ENCODE measurements at regions of chr1 and their contacts with region 1.

Region 1: GRCh38 chr1:42766741-42767509 is at the starts of genes C1orf50 and P3H1:
- DNase-seq: peak; percentile 99
- ATAC-seq: peak; percentile 94
- H3K4me3 Mint-ChIP-seq: no peak within 1 kb of the TSS
- H3K27ac Mint-ChIP-seq: peak within 1 kb of the TSS; percentile 95
- H3K4me1 Mint-ChIP-seq: peaks cover 22% of the 10 kb centered on the region
- H3K27me3 Mint-ChIP-seq: no peaks in the 10 kb centered on the region
- total RNA-seq, gene C1orf50: 10.4 to 10.9 TPM
- total RNA-seq, gene P3H1: 44.1 to 49.9 TPM

Region 2: GRCh38 chr1:42681741-42682483 is 85.0 kb before region 1 on chr1 and contains the start of gene YBX1:
- POLR2A ChIA-PET with region 1: interaction called, 34 read pairs
- DNase-seq: peak; percentile 92
- ATAC-seq: peak; percentile 96
- H3K4me3 Mint-ChIP-seq: peak within 1 kb of the TSS; percentile 95
- H3K27ac Mint-ChIP-seq: peak within 1 kb of the TSS; percentile 97
- H3K4me1 Mint-ChIP-seq: peaks cover 39% of the 10 kb centered on the region
- H3K27me3 Mint-ChIP-seq: no peaks in the 10 kb centered on the region
- total RNA-seq, gene YBX1: 529 to 531 TPM

Region 3: DNA sequence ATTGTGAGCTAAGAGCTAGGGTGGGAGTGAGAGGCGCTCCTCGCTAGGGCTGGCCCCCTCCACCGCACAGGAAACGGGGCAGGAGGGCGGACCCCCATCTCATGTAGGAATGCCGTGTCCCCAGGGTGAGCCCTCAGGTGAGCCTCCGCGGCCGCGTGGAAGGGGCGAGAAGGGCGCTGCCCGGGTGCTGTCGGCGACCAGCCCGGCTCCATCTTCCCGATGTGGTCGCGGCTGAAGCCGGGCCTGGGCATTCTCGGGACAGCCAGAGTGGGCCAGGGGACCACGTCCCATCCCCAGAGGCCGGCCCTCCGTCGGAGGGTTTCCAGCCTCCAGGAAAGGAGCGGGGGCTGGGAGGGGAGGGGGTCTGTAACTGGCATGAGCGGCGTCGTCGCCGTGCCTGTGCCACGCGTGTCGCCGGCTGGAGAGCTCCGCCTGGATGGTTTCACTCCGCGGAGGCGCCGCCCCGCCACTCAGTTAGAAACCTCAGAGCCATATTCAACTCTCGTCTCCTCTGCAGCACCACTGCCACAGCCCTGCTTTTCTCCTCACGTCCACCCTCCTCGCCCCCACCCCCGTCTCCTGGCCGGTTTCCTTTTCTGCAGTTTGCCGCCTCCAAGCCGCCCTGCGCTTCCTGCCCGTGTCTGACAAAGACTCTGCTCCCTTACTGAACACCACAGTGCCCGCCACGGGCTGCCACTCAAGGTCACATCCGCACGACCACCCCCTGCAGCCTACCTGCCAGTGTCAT is 18.2 kb after region 1 on chr1 and contains the start of gene TMEM269:
- POLR2A ChIA-PET with region 1: interaction called, 37 read pairs
- DNase-seq: peak; percentile 65
- ATAC-seq: peak; percentile 88
- H3K4me3 Mint-ChIP-seq: peak within 1 kb of the TSS; percentile 79
- H3K27ac Mint-ChIP-seq: peak within 1 kb of the TSS; percentile 68
- H3K4me1 Mint-ChIP-seq: peaks cover 8% of the 10 kb centered on the region
- H3K27me3 Mint-ChIP-seq: no peaks in the 10 kb centered on the region
- total RNA-seq, gene TMEM269: 0.22 to 0.48 TPM

Region 4: GRCh38 chr1:42846257-42847110 is 79.6 kb after region 1 on chr1 and contains the start of gene ZNF691:
- POLR2A ChIA-PET with region 1: interaction called, 34 read pairs
- DNase-seq: peak; percentile 79
- ATAC-seq: peak; percentile 98
- H3K4me3 Mint-ChIP-seq: peak within 1 kb of the TSS; percentile 98
- H3K27ac Mint-ChIP-seq: peak within 1 kb of the TSS; percentile 87
- H3K4me1 Mint-ChIP-seq: peaks cover 27% of the 10 kb centered on the region
- H3K27me3 Mint-ChIP-seq: no peaks in the 10 kb centered on the region
- total RNA-seq, gene ZNF691: 12.2 to 14.1 TPM

Measured in activated naive CD8-positive, alpha-beta T cell treated with anti-CD3 and anti-CD28 coated beads, Interleukin-2, amount 10 ng/mL, durations not matched to agents 7 days and 5 days (primary cell).